ENCODE measurements at regions of chr2 and their contacts with region 1.

Region 1: DNA sequence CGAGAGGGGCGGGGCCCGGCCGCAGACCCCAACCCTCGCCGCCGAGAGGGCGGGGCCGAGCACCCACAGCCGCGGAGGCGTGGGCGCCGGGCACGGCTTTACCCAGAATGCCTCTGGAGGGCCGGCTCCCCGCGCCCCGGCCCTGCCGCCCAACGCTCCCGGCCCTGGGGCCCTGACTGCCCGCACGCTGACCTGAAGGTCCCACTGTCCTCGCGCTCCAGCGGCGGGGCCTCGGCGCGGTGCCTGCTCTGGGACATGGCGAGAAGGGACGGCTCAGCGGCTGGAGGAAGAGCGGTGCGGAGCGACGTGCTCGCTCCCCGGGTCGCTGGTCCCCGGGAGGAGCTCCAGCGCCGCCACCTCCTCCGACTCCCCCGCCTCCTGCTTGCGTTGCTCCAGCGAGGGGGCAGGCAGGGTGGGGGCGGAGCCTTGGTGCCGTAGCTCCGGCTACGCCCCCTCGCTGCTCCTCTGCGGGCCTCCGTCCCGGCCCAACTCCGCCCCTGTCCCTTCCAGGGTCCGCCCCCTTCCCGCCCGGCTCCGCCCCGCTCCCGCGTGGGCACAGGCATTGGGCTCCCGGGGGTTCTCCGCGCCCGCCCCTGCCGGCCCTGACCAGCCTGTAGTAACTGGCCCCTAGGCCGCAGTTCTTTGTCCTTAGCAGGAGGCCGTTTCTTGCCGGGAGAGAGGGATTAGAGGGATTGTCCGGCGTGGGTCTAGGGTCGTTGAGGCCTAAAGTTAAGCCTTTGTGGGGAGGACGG is at the starts of genes PJVK and PRKRA:
- DNase-seq: peak; percentile 96
- H3K4me3 ChIP-seq: peak within 1 kb of the TSS; percentile 74 to 98 (median 88)
- H3K27ac ChIP-seq: peak within 1 kb of the TSS; percentile 79
- H3K4me1 ChIP-seq: peaks cover 27% of the 10 kb centered on the region
- H3K27me3 ChIP-seq: no peaks in the 10 kb centered on the region
- CTCF ChIP-seq: no peak
- total RNA-seq, gene PJVK: 1.3 to 4.3 TPM
- total RNA-seq, gene PRKRA: 49.0 to 66.8 TPM

Region 2: GRCh38 chr2:178306352-178307073 is 144.4 kb before region 1 on chr2:
- CTCF ChIA-PET with region 1: no interaction called
- dilution Hi-C with region 1: no loop called
- in situ Hi-C with region 1: no loop called
- intact Hi-C with region 1: loop called (anchors 1 kb)
- DNase-seq: peak; percentile 35
- H3K4me3 ChIP-seq: no peak overlapping the region
- H3K27ac ChIP-seq: no peak overlapping the region
- H3K4me1 ChIP-seq: peaks cover 4% of the 10 kb centered on the region
- H3K27me3 ChIP-seq: no peaks in the 10 kb centered on the region
- CTCF ChIP-seq: peak; percentile 48 to 77

Region 3: DNA sequence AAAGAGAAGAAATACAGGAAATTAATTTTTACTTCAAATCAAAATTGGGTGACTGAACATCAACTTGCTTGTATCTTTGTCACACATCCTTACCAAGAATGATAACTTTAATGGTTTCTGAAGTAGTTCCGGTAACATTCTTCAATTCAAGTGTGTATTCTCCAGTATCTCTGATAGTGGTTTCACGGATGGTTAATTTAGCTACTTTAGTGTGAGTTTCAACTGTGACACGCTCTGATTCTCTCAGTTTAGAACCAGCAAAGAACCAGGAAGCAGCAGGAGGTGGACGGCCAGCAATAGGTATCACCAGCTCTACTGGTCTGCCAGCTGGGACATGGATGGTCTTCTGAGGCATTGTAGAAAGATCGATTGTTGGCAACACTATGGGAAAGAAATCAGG is 91.6 kb after region 1 on chr2:
- CTCF ChIA-PET with region 1: no interaction called
- dilution Hi-C with region 1: no loop called
- in situ Hi-C with region 1: no loop called
- intact Hi-C with region 1: no loop called
- DNase-seq: no peak
- H3K4me3 ChIP-seq: no peak overlapping the region
- H3K27ac ChIP-seq: no peak overlapping the region
- H3K4me1 ChIP-seq: no peaks in the 10 kb centered on the region
- H3K27me3 ChIP-seq: no peaks in the 10 kb centered on the region
- CTCF ChIP-seq: no peak

Measured in mammary epithelial cell (primary cell).